CD4-positive, alpha-beta T cell (primary cell): ENCODE measurements at regions of chr20 and their contacts with region 1.

Region 1: GRCh38 chr20:34363062-34363464 is at the start of gene ITCH:
- DNase-seq: peak; percentile 86 to 96 (median 89)
- ATAC-seq: peak; percentile 100
- H3K4me3 ChIP-seq: peak within 1 kb of the TSS; percentile 98
- H3K4me3 Mint-ChIP-seq: peak within 1 kb of the TSS; percentile 100
- H3K27ac ChIP-seq: peak within 1 kb of the TSS; percentile 72 to 78
- H3K27ac Mint-ChIP-seq: peak within 1 kb of the TSS; percentile 95
- H3K4me1 ChIP-seq: peaks cover 47% of the 10 kb centered on the region
- H3K4me1 Mint-ChIP-seq: peaks cover 37% of the 10 kb centered on the region
- H3K27me3 ChIP-seq: no peaks in the 10 kb centered on the region
- H3K27me3 Mint-ChIP-seq: no peaks in the 10 kb centered on the region
- CTCF ChIP-seq: no peak
- total RNA-seq, gene ITCH: 44.2 to 47.0 TPM

Region 2: GRCh38 chr20:32737371-32738223 is 1625.5 kb before region 1 on chr20:
- CTCF ChIA-PET with region 1: no interaction called
- POLR2A ChIA-PET with region 1: no interaction called
- intact Hi-C with region 1: loop called in 1 of 2 experiments (anchors 10 kb)
- DNase-seq: peak in 9 of 14 experiments; percentile 13 to 80 (median 28)
- ATAC-seq: peak; percentile 91
- H3K4me3 ChIP-seq: no peak overlapping the region
- H3K4me3 Mint-ChIP-seq: peak overlapping the region; percentile 74
- H3K27ac ChIP-seq: peak overlapping the region; percentile 42 to 68
- H3K27ac Mint-ChIP-seq: peak overlapping the region; percentile 93
- H3K4me1 ChIP-seq: peaks cover 59% of the 10 kb centered on the region
- H3K4me1 Mint-ChIP-seq: peaks cover 54% of the 10 kb centered on the region
- H3K27me3 ChIP-seq: no peaks in the 10 kb centered on the region
- H3K27me3 Mint-ChIP-seq: no peaks in the 10 kb centered on the region
- CTCF ChIP-seq: no peak

Region 3: GRCh38 chr20:34403908-34404307 is 40.8 kb after region 1 on chr20:
- CTCF ChIA-PET with region 1: no interaction called
- POLR2A ChIA-PET with region 1: interaction called, 3 read pairs
- intact Hi-C with region 1: loop called in 1 of 2 experiments (anchors 2 kb)
- DNase-seq: no peak
- ATAC-seq: no peak
- H3K4me3 ChIP-seq: no peak overlapping the region
- H3K4me3 Mint-ChIP-seq: peak overlapping the region; percentile 27
- H3K27ac ChIP-seq: no peak overlapping the region
- H3K27ac Mint-ChIP-seq: peak overlapping the region; percentile 47
- H3K4me1 ChIP-seq: peaks cover 17% of the 10 kb centered on the region
- H3K4me1 Mint-ChIP-seq: peaks cover 63% of the 10 kb centered on the region
- H3K27me3 ChIP-seq: no peaks in the 10 kb centered on the region
- H3K27me3 Mint-ChIP-seq: no peaks in the 10 kb centered on the region
- CTCF ChIP-seq: no peak

Region 4: DNA sequence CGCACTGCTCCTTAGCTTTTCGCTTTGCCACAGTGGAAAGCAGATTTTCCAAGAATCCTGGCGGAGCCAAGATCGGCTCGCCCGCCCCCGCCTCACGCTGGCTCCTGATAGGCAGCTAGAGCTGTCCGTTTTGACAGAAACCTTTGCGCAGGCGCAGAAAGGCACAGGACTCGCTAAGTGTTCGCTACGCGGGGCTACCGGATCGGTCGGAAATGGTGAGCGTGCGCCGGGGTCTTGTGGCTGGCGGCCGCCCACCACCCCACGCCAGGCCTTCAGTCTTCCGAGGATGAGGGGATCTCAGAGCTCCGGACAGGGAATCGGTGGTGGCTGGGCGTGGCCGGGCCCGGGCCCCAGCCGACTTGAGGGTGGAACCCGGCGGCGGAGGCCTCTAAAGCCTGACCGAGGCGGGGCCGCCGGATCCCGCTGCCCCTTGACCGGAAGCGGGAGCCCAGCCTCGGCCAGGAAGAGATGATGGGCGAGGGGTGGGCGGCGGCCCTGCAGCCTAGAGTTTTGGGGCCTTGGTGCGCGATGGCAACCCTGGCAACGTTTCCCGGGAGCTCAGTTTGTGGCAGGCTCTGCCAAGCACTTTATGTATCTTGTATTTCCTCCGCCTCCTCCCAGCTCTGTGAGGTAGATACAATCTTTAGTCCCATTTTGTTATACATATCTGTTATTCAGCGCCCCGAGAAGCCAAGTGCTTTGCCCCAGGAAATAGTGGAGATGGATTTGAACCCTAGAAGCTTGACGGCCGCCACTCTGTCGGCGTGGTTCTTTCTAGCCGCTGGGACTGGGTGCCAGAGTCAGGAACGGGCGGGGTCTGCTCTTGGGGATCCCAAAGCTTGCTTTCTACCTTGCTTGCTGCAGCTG is 153.4 kb after region 1 on chr20 and contains the start of gene DYNLRB1:
- CTCF ChIA-PET with region 1: interaction called, 4 read pairs
- POLR2A ChIA-PET with region 1: interaction called, 19 read pairs
- intact Hi-C with region 1: loop called in 1 of 2 experiments (anchors 5 kb)
- DNase-seq: peak; percentile 88 to 96 (median 94)
- ATAC-seq: peak; percentile 74
- H3K4me3 ChIP-seq: peak within 1 kb of the TSS; percentile 82
- H3K4me3 Mint-ChIP-seq: peak within 1 kb of the TSS; percentile 99
- H3K27ac ChIP-seq: peak within 1 kb of the TSS; percentile 60 to 80
- H3K27ac Mint-ChIP-seq: peak within 1 kb of the TSS; percentile 94
- H3K4me1 ChIP-seq: peaks cover 30% of the 10 kb centered on the region
- H3K4me1 Mint-ChIP-seq: peaks cover 70% of the 10 kb centered on the region
- H3K27me3 ChIP-seq: no peaks in the 10 kb centered on the region
- H3K27me3 Mint-ChIP-seq: no peaks in the 10 kb centered on the region
- CTCF ChIP-seq: no peak
- total RNA-seq, gene DYNLRB1: 38.3 to 40.3 TPM

Region 5: DNA sequence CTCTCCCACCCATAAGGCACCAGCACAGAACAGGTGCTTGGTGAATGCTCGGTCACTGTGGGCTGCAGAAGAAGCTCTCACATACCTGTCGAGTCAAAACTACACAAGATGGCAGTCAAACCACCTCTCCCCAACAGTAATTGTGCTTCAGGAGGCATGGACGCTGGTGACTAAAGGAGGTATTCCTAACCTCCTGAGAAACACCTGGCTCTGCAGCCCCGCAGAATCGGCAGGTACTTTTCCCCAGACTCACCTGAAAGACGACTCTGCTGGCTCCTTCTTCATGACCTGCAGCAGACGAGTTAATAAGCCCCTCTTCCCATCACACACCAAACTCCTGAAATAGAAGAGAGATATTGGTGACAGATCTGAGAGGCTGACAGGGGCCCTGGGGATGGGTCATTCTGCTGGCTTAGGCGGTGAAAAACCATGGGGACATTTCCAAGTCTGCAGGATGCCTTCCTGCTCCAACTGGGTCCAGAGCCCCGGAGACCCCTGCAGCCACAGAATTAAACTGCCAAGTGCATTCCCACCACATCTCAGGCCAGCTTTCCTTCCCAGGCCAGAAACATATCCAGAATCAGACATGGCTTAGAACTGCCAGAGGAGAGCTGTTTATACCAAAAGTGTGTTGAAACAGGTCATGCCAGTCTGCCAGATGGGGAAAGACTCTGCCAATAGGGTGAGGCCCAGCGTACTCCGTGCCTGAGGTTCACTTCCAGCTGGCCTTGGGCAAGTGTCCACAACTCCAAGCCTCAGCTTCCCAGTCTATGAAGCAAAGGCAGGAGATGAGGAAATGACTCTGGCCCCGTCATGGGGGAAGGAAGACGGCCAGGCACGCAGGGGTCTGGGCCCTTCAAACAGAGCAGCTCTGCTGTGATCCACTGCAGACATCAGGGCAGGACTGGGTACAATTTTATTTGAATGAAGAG is 645.6 kb after region 1 on chr20:
- CTCF ChIA-PET with region 1: no interaction called
- POLR2A ChIA-PET with region 1: no interaction called
- intact Hi-C with region 1: no loop called
- DNase-seq: peak in 1 of 14 experiments; percentile 15
- ATAC-seq: no peak
- H3K4me3 ChIP-seq: no peak overlapping the region
- H3K4me3 Mint-ChIP-seq: no peak overlapping the region
- H3K27ac ChIP-seq: no peak overlapping the region
- H3K27ac Mint-ChIP-seq: no peak overlapping the region
- H3K4me1 ChIP-seq: no peaks in the 10 kb centered on the region
- H3K4me1 Mint-ChIP-seq: no peaks in the 10 kb centered on the region
- H3K27me3 ChIP-seq: no peaks in the 10 kb centered on the region
- H3K27me3 Mint-ChIP-seq: no peaks in the 10 kb centered on the region
- CTCF ChIP-seq: no peak